ENCODE measurements at regions of chr2 and their contacts with region 1.

Region 1: DNA sequence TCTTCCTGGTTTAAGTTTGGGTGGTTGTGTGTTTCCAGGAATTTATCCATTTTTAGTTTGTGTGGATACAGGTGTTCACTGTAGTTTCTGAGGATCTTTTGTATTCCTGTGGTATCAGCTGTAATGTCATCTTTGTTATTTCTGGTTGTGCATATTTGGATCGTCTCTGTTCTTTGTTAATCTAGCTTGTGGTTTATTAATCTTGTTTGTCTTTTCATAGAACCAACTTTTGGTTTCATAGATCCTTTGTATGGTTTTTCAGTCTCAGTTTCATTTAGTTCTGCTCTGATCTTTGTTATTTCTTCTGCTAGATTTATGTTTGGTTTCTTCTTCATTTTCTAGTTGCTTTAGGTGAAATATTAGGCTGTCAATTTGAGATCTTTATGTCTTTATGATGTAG is 202.4 kb upstream of the ZSWIM2 start:
- DNase-seq: peak; percentile 2
- H3K4me3 ChIP-seq: no peak overlapping the region
- CTCF ChIP-seq: no peak

Region 2: DNA sequence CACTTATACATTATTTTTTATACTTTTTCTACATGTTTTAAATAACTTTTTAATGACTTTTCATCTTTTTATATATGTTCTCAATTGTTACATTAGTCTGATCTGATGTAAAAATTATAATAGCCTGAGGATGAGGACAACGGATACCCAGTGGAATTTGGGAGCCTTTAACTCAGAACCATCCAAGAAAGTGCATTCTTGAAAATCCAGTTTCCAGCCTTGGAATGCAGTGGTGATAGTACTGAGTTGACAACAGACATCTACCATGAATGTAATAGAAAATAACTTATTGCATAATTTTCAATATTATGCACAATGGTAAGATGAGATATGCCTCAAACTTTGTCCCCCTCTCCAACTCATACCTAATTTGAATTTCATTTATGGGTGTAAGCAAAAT is 685.9 kb before region 1 on chr2:
- in situ Hi-C with region 1: no loop called
- DNase-seq: no peak
- H3K4me3 ChIP-seq: no peak overlapping the region
- CTCF ChIP-seq: no peak

Region 3: DNA sequence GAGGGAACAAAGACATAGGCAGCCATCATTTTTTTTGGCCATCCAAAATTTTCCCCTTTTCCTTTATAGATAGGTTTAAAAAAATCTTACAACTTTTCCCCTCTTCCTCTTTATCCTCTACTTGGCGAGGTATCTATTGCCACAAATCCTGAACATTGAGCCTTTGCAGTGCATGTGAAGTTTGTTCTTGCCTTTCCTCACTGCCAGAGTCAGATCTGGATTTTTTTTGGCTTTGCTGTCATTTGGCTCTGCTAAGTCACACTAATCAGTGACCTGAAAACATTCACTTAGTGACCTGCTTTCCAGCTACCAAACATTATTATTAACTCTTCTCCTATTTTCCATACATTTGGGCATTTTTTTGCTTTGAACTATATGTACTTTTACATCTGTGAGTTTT is 46.8 kb after region 1 on chr2:
- in situ Hi-C with region 1: loop called (anchors 5 kb)
- DNase-seq: no peak
- H3K4me3 ChIP-seq: no peak overlapping the region
- CTCF ChIP-seq: no peak

Measured in astrocyte of the cerebellum (primary cell).